ENCODE measurements at regions of chr10 and their contacts with region 1.

Region 1: GRCh38 chr10:123994417-123995081 is 98.8 kb downstream of the CHST15 start:
- DNase-seq: peak; percentile 92
- ATAC-seq: peak; percentile 87

Region 2: DNA sequence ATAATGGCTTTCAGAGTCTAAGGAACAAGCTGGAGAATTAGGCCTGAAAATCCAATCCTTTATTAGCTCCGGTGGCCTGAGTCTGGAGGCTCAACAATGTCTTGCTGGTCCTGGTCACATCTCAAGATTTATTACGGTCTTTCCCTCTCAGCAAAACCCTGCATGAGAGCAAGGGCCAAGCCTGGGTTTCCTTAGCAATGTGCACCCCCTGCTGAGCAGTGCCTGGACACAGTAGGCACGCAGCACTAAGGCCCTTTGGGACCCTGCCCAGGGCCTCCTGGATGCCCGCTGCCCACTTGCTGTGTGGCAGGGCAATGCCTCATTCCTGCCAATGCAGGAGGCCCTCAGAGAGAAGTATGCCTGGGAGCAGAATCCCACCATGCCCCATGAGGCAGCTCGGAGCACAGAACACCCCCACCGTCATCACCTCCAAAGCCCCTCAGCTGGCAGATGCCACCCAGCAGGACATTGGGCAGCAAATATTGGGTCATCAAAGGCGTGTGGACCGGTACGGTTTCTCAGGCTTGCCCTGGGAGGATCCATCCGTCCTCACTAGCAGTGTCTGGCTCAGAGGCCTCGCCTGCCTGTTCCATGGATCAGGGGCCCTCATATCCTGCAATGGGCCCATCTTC is 267.8 kb after region 1 on chr10:
- intact Hi-C with region 1: loop called (anchors 5 kb)
- DNase-seq: no peak
- ATAC-seq: no peak

Region 3: DNA sequence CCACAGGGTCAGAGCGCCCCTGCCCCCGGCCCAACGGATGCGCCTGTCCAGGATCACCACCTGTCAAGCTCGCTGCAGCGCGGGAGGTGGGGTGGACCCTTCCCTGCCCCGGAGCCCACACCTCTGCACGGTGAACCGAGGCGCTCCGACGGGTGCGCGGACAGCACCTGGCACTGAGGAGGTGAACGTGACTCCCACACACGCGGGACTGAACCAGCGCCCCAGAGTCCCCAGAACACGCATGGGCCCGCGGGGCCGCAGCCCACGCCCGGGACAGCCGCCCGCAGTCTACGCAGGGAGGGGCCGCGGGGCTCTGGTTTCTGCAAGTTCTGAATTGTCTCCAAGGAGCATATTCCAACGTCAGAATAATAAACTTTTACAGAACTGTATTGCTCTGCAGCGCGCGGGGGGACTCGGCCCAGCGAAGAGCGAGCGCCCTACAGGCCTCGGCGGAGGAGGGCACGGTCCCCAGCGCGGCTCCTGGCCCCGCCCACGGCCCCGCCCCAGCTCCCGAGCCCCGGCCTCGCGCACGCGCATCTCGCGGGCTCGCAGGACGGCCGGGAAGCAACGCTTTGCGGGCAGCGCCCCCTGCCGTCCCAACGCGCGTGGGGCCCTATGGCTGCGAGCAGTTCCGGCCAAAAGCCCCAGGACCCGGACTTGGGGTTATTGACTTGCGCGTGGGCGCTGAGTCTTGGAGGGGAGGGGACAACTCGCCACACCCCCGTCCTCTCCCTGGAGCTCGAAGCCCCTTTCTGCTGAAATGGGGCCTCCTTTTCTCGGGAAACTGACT is 394.5 kb after region 1 on chr10:
- intact Hi-C with region 1: loop called (anchors 5 kb)
- DNase-seq: peak; percentile 96
- ATAC-seq: peak; percentile 100